ENCODE measurements at regions of chr9 and their contacts with region 1.

Region 1: GRCh38 chr9:111458139-111459009 is 25.8 kb downstream of the ECPAS start:
- DNase-seq: no peak
- ATAC-seq: peak; percentile 90
- H3K4me3 ChIP-seq: no peak overlapping the region
- H3K27ac ChIP-seq: no peak overlapping the region
- H3K4me1 ChIP-seq: 0 out of 2 replicates have a peak, but pooled peaks cover 5% of the 10 kb centered on the region
- H3K27me3 ChIP-seq: no peaks in the 10 kb centered on the region
- CTCF ChIP-seq: no peak
- EP300 ChIP-seq: no peak
- POLR2A ChIP-seq: no peak
- RAD21 ChIP-seq: no peak

Region 2: DNA sequence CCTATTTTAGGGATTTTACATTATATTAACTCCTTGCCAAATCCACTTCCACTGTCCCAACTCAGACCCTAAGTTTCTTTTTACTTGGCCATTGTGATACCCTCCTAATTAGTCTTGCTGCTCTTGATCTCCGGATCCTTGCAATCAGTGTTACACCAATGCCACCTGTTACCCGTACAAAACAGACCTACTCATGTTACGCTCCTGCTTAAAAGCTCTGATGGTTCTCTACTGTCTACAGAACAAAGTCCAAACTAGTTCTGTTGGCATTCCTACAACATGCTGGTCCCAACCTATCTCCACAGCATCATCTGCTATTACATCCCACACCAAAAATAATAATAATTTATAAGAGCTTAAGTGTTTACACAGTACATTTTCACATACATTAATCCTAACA is 16.0 kb after region 1 on chr9:
- CTCF ChIA-PET with region 1: no interaction called
- POLR2A ChIA-PET with region 1: interaction called, 3 read pairs
- RAD21 ChIA-PET with region 1: interaction called, 6 read pairs
- SMC1A ChIA-PET with region 1: interaction called, 11 read pairs
- in situ Hi-C with region 1: no loop called
- intact Hi-C with region 1: no loop called
- DNase-seq: no peak
- ATAC-seq: no peak
- H3K4me3 ChIP-seq: no peak overlapping the region
- H3K27ac ChIP-seq: no peak overlapping the region
- H3K4me1 ChIP-seq: peaks cover 14% of the 10 kb centered on the region
- H3K27me3 ChIP-seq: no peaks in the 10 kb centered on the region
- CTCF ChIP-seq: no peak
- EP300 ChIP-seq: no peak
- POLR2A ChIP-seq: no peak
- RAD21 ChIP-seq: no peak

Region 3: DNA sequence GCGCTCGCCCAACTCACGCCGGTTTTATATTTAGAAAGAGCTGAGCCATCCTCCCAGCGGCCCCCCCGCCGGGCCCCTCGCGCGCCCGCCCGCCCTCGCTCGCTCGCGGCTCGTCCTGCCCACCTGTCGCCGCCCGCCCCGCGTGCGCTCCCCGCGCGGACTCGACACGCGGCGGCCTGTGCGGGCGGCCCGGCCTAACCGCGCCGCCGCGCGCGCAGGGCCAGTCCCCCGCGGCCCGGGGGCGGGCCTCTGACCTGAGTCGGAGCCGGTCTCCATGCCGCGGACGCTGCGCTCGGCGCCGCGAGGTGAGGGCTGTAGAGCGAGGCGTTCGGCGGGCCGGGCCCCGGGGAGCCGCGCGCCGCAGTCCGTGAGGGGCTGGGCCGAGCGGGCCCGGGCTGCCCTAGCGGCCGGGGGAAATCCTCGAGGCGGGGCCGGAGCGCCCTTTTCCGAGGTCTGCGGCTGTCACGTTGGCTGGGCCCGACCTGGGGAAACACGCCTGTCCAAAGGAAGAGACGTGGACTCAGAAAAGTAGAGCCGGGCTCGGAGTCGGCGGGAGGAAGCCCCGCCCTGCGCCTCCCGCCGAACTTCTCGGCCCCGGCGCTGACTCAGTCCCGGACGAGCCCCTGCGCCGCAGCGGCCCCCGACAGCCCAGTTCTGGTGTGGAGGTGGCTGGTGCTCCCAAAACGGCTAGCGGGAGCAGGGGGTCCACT is 25.6 kb after region 1 on chr9 and contains the start of gene ECPAS:
- CTCF ChIA-PET with region 1: no interaction called
- POLR2A ChIA-PET with region 1: interaction called, 11 read pairs
- RAD21 ChIA-PET with region 1: no interaction called
- SMC1A ChIA-PET with region 1: no interaction called
- in situ Hi-C with region 1: no loop called
- intact Hi-C with region 1: no loop called
- DNase-seq: no peak
- ATAC-seq: peak; percentile 80
- H3K4me3 ChIP-seq: peak within 1 kb of the TSS; percentile 79
- H3K27ac ChIP-seq: peak within 1 kb of the TSS; percentile 96
- H3K4me1 ChIP-seq: no peaks in the 10 kb centered on the region; the same call in 1 of the 2 replicates
- H3K27me3 ChIP-seq: no peaks in the 10 kb centered on the region
- CTCF ChIP-seq: no peak
- EP300 ChIP-seq: no peak
- POLR2A ChIP-seq: peak; percentile 84
- RAD21 ChIP-seq: no peak
- polyA plus RNA-seq, gene ECPAS: 11.2 to 18.7 TPM